Activated T-helper 1 cell treated with anti-CD3 and anti-CD28 coated beads, Interleukin-12 subunit alpha, Interleukin-12 subunit beta, Interleukin-2, Interleukin-4 antibody, amounts not matched to agents 30 ng/mL and 10 ng/mL and 1 ng/mL, durations not matched to agents 14 hours and 24 hours and 36 hours (primary cell): ENCODE measurements at regions of chr14 and their contacts with region 1.

Region 1: DNA sequence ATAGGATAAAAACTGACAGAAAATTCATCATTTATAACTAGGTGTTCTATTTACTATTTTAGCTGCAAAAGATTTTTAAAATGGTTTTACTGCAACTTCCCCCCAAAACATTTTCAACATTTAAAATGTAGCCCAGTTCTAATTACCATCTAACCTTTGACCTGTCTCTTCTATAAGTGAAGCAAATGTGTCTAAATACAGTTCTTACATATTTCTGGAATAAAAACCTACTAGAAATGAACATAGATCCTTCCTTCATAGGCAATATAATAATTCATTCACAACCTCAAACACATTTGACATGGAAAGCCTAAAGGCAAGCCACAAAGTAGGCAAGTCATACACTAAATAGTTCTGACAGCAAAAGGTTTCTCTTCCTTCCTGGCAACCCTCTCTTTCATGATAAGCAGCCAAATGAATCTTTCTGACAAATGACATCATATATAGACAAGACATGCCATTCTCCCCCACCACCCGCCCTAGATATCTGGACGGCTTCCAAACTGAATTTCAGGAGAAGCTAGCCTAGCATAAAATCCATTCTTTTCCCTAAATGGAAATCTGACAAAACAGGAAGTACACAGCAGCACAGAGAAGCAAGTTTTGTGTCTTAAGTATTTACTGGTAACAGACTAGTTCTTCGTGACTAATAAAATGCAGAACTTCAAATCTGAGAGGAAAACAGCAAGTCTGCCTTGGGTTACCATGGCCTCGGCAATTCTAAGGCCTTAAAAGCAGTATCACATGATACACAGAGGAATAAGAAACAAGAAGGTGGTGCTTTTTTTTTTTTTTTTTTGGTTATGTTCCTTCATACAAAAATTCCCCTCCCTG is 17.2 kb upstream of the ARID4A start:
- DNase-seq: peak; percentile 19
- H3K4me3 Mint-ChIP-seq: peak overlapping the region; percentile 62
- H3K27ac Mint-ChIP-seq: peak overlapping the region; percentile 92
- H3K4me1 Mint-ChIP-seq: peaks cover 51% of the 10 kb centered on the region
- H3K27me3 Mint-ChIP-seq: no peaks in the 10 kb centered on the region

Region 2: DNA sequence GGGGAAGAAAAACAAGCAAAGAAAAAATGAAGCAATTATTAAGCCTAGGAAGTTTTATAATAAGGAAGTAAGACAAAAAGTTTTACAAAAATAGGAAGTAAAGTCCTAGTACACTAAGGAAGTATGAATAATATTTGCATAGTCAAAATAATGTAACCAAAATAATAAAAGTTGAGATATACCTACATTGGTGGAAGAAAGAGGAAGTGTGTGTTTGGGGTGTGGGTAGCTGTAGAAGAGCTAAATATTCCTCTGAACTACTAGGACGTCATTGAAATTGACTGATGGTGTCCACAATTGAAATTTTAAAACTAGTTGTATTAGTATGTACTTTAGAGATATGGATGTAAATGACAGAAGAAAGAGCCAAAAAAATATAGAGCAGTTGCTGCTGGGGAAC is 1242.5 kb before region 1 on chr14:
- intact Hi-C with region 1: no loop called
- DNase-seq: no peak
- H3K4me3 Mint-ChIP-seq: no peak overlapping the region
- H3K27ac Mint-ChIP-seq: no peak overlapping the region
- H3K4me1 Mint-ChIP-seq: no peaks in the 10 kb centered on the region
- H3K27me3 Mint-ChIP-seq: peaks cover 4% of the 10 kb centered on the region

Region 3: GRCh38 chr14:58152014-58152857 is 128.9 kb before region 1 on chr14 and contains the start of gene ARMH4:
- intact Hi-C with region 1: no loop called
- DNase-seq: peak; percentile 66
- H3K4me3 Mint-ChIP-seq: peak within 1 kb of the TSS; percentile 80
- H3K27ac Mint-ChIP-seq: no peak within 1 kb of the TSS
- H3K4me1 Mint-ChIP-seq: peaks cover 21% of the 10 kb centered on the region
- H3K27me3 Mint-ChIP-seq: peaks cover 51% of the 10 kb centered on the region
- total RNA-seq, gene ARMH4: not detected in 2 replicates

Region 4: GRCh38 chr14:58258156-58258555 is 23.0 kb before region 1 on chr14:
- intact Hi-C with region 1: loop called (anchors 2 kb)
- DNase-seq: no peak
- H3K4me3 Mint-ChIP-seq: no peak overlapping the region
- H3K27ac Mint-ChIP-seq: no peak overlapping the region
- H3K4me1 Mint-ChIP-seq: no peaks in the 10 kb centered on the region
- H3K27me3 Mint-ChIP-seq: no peaks in the 10 kb centered on the region

Region 5: DNA sequence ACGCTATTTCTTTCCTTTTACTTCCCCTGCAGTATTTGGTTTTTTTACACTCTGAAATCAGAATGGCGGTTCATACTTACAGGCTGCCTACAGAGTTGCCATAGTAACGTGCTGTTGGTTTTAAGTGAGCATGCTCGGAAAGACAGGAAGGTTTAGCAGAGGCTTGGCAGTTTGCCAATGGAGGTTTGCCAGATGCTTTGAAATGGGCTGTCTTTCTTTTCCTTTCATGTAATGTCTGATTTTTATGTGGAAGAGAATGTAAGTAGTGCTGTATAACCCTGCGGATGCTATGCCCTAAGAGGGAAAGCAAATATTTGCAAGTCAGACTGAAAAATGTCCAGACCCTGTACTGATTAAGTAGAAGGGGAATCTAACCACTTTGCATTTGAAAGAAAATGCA is 49.9 kb after region 1 on chr14:
- intact Hi-C with region 1: loop called (anchors 1 kb)
- DNase-seq: peak; percentile 84
- H3K4me3 Mint-ChIP-seq: peak overlapping the region; percentile 64
- H3K27ac Mint-ChIP-seq: peak overlapping the region; percentile 91
- H3K4me1 Mint-ChIP-seq: peaks cover 19% of the 10 kb centered on the region
- H3K27me3 Mint-ChIP-seq: no peaks in the 10 kb centered on the region